SK-N-SH (cell line): ENCODE measurements at regions of chr3 and their contacts with region 1.

Region 1: DNA sequence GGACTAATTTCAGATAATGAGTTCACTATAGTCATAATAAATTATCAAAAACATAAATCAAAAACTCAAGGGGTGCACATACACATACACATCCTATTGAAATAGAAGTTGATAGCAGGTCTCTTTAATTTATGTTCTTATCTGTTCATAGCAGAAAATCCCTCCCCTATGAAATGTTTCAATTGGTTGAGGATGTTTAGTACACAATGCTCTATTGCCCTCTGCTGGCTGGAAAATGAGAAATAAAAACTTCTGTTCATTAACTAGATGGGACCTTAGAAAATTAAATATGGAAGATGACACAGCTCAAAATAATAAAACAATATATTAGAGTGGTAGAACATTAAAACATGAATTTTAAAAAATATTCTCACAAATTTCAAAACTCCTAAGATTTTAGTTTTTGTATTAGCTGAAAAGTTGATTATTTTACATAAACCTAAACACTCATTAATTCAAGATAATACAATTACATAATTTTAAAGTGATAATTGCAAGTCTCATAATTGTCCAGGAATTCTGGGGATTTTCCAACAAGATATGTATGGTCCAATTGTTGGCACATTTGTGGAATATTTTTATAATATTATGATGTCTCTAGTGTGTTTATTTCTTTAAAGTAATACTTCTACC is 735.0 kb downstream of the ROBO1 start:
- DNase-seq: peak; percentile 51
- H3K4me3 ChIP-seq: no peak overlapping the region; a peak in 1 of 4 replicates
- H3K27ac ChIP-seq: no peak overlapping the region
- H3K4me1 ChIP-seq: peaks cover 0 to 9% of the 10 kb centered on the region in 2 experiments; a peak in 2 of 4 replicates
- H3K27me3 ChIP-seq: no peaks in the 10 kb centered on the region
- CTCF ChIP-seq: peak; percentile 83
- EP300 ChIP-seq: no peak
- RAD21 ChIP-seq: peak; percentile 92

Region 2: GRCh38 chr3:78645628-78646310 is 387.0 kb before region 1 on chr3:
- CTCF ChIA-PET with region 1: interaction called, 14 read pairs
- POLR2A ChIA-PET with region 1: no interaction called
- DNase-seq: peak; percentile 36
- H3K4me3 ChIP-seq: no peak overlapping the region; a peak in 1 of 4 replicates
- H3K27ac ChIP-seq: no peak overlapping the region
- H3K4me1 ChIP-seq: no peaks in the 10 kb centered on the region
- H3K27me3 ChIP-seq: no peaks in the 10 kb centered on the region
- CTCF ChIP-seq: peak; percentile 94
- EP300 ChIP-seq: no peak
- RAD21 ChIP-seq: peak; percentile 93

Region 3: DNA sequence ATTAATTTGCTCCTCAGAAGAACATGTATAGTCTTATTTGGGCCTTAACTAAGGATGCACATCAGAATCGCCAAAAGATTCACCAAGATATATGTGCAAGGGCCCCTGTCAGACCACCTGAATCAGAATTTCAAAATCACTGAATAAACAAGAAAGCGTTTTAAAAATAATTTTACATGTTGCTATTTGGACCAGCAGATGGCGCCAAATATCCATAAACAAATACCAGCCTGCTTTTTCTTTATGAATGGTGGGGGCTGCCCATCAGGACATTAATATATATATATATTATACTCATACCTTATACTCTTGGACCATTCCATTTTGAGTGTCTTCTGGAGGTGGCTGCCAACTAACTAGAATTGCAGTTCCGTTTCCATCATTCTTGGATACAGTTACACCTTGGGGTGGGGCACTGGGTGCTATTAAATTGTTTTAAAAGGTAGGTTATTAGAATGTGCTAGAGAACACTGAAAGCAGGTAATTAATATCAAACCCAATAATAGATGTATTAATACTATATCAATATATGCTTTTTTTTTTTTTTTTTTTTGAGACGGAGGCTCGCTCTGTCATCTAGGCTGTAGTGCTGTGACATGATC is 373.3 kb before region 1 on chr3:
- CTCF ChIA-PET with region 1: interaction called, 54 read pairs
- POLR2A ChIA-PET with region 1: no interaction called
- DNase-seq: peak; percentile 21
- H3K4me3 ChIP-seq: no peak overlapping the region
- H3K27ac ChIP-seq: no peak overlapping the region
- H3K4me1 ChIP-seq: no peaks in the 10 kb centered on the region
- H3K27me3 ChIP-seq: no peaks in the 10 kb centered on the region
- CTCF ChIP-seq: peak; percentile 76
- EP300 ChIP-seq: no peak
- RAD21 ChIP-seq: peak; percentile 84

Region 4: GRCh38 chr3:78666470-78666800 is 366.4 kb before region 1 on chr3:
- CTCF ChIA-PET with region 1: interaction called, 26 read pairs
- POLR2A ChIA-PET with region 1: no interaction called
- DNase-seq: no peak
- H3K4me3 ChIP-seq: no peak overlapping the region
- H3K27ac ChIP-seq: no peak overlapping the region; a peak in 1 of 4 replicates
- H3K4me1 ChIP-seq: peaks cover 0 to 10% of the 10 kb centered on the region in 2 experiments; a peak in 2 of 4 replicates
- H3K27me3 ChIP-seq: no peaks in the 10 kb centered on the region
- CTCF ChIP-seq: no peak
- EP300 ChIP-seq: no peak
- RAD21 ChIP-seq: no peak

Region 5: GRCh38 chr3:78926523-78926922 is 106.3 kb before region 1 on chr3:
- CTCF ChIA-PET with region 1: no interaction called
- POLR2A ChIA-PET with region 1: no interaction called
- DNase-seq: no peak
- H3K4me3 ChIP-seq: no peak overlapping the region
- H3K27ac ChIP-seq: no peak overlapping the region
- H3K4me1 ChIP-seq: no peaks in the 10 kb centered on the region; a peak in 2 of 4 replicates
- H3K27me3 ChIP-seq: no peaks in the 10 kb centered on the region
- CTCF ChIP-seq: no peak
- EP300 ChIP-seq: no peak
- RAD21 ChIP-seq: no peak

Region 6: GRCh38 chr3:78988324-78988723 is 44.5 kb before region 1 on chr3:
- CTCF ChIA-PET with region 1: interaction called, 22 read pairs
- POLR2A ChIA-PET with region 1: no interaction called
- DNase-seq: peak; percentile 27
- H3K4me3 ChIP-seq: no peak overlapping the region
- H3K27ac ChIP-seq: no peak overlapping the region
- H3K4me1 ChIP-seq: peaks cover 0 to 12% of the 10 kb centered on the region in 2 experiments; a peak in 2 of 4 replicates
- H3K27me3 ChIP-seq: no peaks in the 10 kb centered on the region
- CTCF ChIP-seq: peak; percentile 67
- EP300 ChIP-seq: no peak
- RAD21 ChIP-seq: peak; percentile 79

Region 7: GRCh38 chr3:79019137-79019923 is 13.5 kb before region 1 on chr3:
- CTCF ChIA-PET with region 1: interaction called, 19 read pairs
- POLR2A ChIA-PET with region 1: no interaction called
- DNase-seq: peak; percentile 89
- H3K4me3 ChIP-seq: peak overlapping the region; percentile 89 to 98
- H3K27ac ChIP-seq: peak overlapping the region; percentile 96 to 100
- H3K4me1 ChIP-seq: peaks cover 7 to 22% of the 10 kb centered on the region in 2 experiments; a peak in 3 of 4 replicates
- H3K27me3 ChIP-seq: no peaks in the 10 kb centered on the region
- CTCF ChIP-seq: no peak
- EP300 ChIP-seq: peak in 1 of 2 experiments; percentile 63; a peak in 2 of 4 replicates
- RAD21 ChIP-seq: no peak

Region 8: GRCh38 chr3:79414806-79415205 is 382.0 kb after region 1 on chr3:
- CTCF ChIA-PET with region 1: no interaction called
- POLR2A ChIA-PET with region 1: no interaction called
- DNase-seq: no peak
- H3K4me3 ChIP-seq: no peak overlapping the region
- H3K27ac ChIP-seq: peak overlapping the region in 1 of 2 experiments; percentile 69; a peak in 2 of 4 replicates
- H3K4me1 ChIP-seq: no peaks in the 10 kb centered on the region; a peak in 1 of 4 replicates
- H3K27me3 ChIP-seq: no peaks in the 10 kb centered on the region
- CTCF ChIP-seq: no peak
- EP300 ChIP-seq: no peak
- RAD21 ChIP-seq: no peak